A549 (cell line): ENCODE measurements at regions of chr2 and their contacts with region 1.

Region 1: GRCh38 chr2:199704358-199705238 is 146.4 kb downstream of the FTCDNL1 start:
- DNase-seq: peak; percentile 40 to 52
- ATAC-seq: peak; percentile 94 to 98
- H3K4me3 ChIP-seq: no peak overlapping the region
- H3K27ac ChIP-seq: no peak overlapping the region
- H3K4me1 ChIP-seq: no peaks in the 10 kb centered on the region
- CTCF ChIP-seq: peak; percentile 78
- EP300 ChIP-seq: no peak
- POLR2A ChIP-seq: no peak
- RAD21 ChIP-seq: peak; percentile 91

Region 2: DNA sequence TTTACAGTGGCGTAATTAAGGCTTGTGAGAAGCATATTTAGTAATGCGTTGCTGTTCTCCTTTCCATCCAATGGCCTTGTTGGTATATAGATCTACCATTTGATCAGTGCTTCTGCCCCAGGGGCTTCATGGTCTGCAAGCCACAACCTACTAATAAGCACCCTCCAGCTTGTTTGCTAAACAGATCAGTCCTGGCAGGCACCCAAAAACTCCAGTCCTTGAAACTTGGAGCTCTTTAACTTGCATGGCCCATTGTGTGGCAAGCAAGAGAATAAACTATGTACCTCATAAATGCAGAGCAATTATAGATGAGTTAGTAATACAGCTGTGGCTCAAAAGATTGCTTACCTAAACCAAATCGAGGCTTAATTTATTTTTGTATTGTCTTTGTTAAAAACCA is 12.1 kb before region 1 on chr2:
- CTCF ChIA-PET with region 1: interaction called, 27 read pairs
- POLR2A ChIA-PET with region 1: no interaction called
- DNase-seq: no peak
- ATAC-seq: no peak
- H3K4me3 ChIP-seq: no peak overlapping the region
- H3K27ac ChIP-seq: no peak overlapping the region
- H3K4me1 ChIP-seq: no peaks in the 10 kb centered on the region
- CTCF ChIP-seq: no peak
- EP300 ChIP-seq: no peak
- POLR2A ChIP-seq: no peak
- RAD21 ChIP-seq: no peak

Region 3: GRCh38 chr2:199861132-199861774 is 156.7 kb after region 1 on chr2:
- CTCF ChIA-PET with region 1: interaction called, 13 read pairs
- POLR2A ChIA-PET with region 1: no interaction called
- DNase-seq: peak; percentile 6 to 27
- ATAC-seq: peak in 1 of 2 experiments; percentile 55; a peak in 2 of 6 replicates
- H3K4me3 ChIP-seq: no peak overlapping the region
- H3K27ac ChIP-seq: no peak overlapping the region
- H3K4me1 ChIP-seq: no peaks in the 10 kb centered on the region
- CTCF ChIP-seq: peak; percentile 75
- EP300 ChIP-seq: no peak
- POLR2A ChIP-seq: no peak
- RAD21 ChIP-seq: peak; percentile 64 to 66

Region 4: DNA sequence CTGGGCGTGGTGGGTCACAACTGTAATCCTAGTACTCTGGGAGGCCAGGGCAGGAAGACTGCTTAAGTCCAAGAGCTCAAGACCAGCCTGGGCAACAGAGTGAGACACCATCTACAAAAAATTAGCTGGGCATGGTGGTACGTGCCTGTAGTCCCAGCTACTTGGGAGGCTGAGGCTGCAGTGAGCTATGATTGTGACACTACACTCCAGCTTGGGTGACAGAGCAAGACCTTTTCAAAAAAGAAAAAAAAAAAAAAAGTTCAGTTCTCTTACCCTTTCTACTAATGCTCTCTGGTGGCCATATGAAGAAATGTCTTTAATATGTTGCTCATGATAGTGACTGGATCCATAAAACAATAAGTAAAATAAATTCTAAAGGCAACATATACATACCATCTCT is 235.8 kb after region 1 on chr2:
- CTCF ChIA-PET with region 1: interaction called, 10 read pairs
- POLR2A ChIA-PET with region 1: no interaction called
- DNase-seq: peak; percentile 16 to 41
- ATAC-seq: peak; percentile 70 to 88
- H3K4me3 ChIP-seq: no peak overlapping the region
- H3K27ac ChIP-seq: no peak overlapping the region
- H3K4me1 ChIP-seq: peaks cover 10% of the 10 kb centered on the region; the same call in 1 of the 3 replicates
- CTCF ChIP-seq: peak; percentile 43
- EP300 ChIP-seq: no peak
- POLR2A ChIP-seq: no peak
- RAD21 ChIP-seq: peak; percentile 48 to 59; a peak in 4 of 5 replicates